Activated CD8-positive, alpha-beta T cell treated with anti-CD3 and anti-CD28 coated beads for 36 hours (primary cell): ENCODE measurements at regions of chr5 and their contacts with region 1.

Region 1: GRCh38 chr5:157328277-157328912 is 62.5 kb downstream of the CYFIP2 start:
- DNase-seq: peak; percentile 69
- ATAC-seq: peak; percentile 97
- H3K4me3 Mint-ChIP-seq: no peak overlapping the region
- H3K27ac Mint-ChIP-seq: peak overlapping the region; percentile 49
- H3K4me1 Mint-ChIP-seq: peaks cover 49% of the 10 kb centered on the region
- H3K27me3 Mint-ChIP-seq: no peaks in the 10 kb centered on the region
- CTCF ChIP-seq: peak; percentile 83

Region 2: DNA sequence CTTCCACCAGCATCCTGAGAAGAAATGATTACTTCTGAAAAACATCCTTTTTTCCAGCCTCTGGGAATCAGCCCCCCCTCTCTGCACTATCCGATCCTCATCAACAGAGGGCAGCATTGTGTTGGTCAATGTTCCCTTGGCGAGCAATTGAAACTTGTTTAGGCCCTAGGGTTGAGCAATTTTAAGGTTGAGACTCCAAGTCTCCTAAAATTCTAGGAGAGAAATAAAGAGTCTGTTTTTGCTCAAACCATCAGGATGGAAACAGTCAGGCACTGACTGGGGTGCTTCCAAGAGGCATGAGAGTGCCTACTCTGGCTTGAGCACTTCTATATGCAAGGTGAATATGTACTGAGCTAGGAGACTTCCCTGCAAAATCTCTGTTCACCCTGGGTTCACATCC is 74.8 kb before region 1 on chr5:
- CTCF ChIA-PET with region 1: interaction called, 14 read pairs
- POLR2A ChIA-PET with region 1: no interaction called
- intact Hi-C with region 1: no loop called
- DNase-seq: no peak
- ATAC-seq: no peak
- H3K4me3 Mint-ChIP-seq: peak overlapping the region; percentile 28
- H3K27ac Mint-ChIP-seq: peak overlapping the region; percentile 95
- H3K4me1 Mint-ChIP-seq: peaks cover 94% of the 10 kb centered on the region
- H3K27me3 Mint-ChIP-seq: no peaks in the 10 kb centered on the region
- CTCF ChIP-seq: peak; percentile 81

Region 3: GRCh38 chr5:157342822-157343402 is 14.5 kb after region 1 on chr5:
- CTCF ChIA-PET with region 1: interaction called, 112 read pairs
- POLR2A ChIA-PET with region 1: interaction called, 4 read pairs
- intact Hi-C with region 1: no loop called
- DNase-seq: peak; percentile 46
- ATAC-seq: no peak
- H3K4me3 Mint-ChIP-seq: no peak overlapping the region
- H3K27ac Mint-ChIP-seq: peak overlapping the region; percentile 50
- H3K4me1 Mint-ChIP-seq: peaks cover 39% of the 10 kb centered on the region
- H3K27me3 Mint-ChIP-seq: no peaks in the 10 kb centered on the region
- CTCF ChIP-seq: peak; percentile 69

Region 4: GRCh38 chr5:157362012-157362411 is 33.6 kb after region 1 on chr5:
- CTCF ChIA-PET with region 1: interaction called, 21 read pairs
- POLR2A ChIA-PET with region 1: no interaction called
- intact Hi-C with region 1: no loop called
- DNase-seq: no peak
- ATAC-seq: no peak
- H3K4me3 Mint-ChIP-seq: no peak overlapping the region
- H3K27ac Mint-ChIP-seq: peak overlapping the region; percentile 69
- H3K4me1 Mint-ChIP-seq: peaks cover 12% of the 10 kb centered on the region
- H3K27me3 Mint-ChIP-seq: no peaks in the 10 kb centered on the region
- CTCF ChIP-seq: no peak

Region 5: DNA sequence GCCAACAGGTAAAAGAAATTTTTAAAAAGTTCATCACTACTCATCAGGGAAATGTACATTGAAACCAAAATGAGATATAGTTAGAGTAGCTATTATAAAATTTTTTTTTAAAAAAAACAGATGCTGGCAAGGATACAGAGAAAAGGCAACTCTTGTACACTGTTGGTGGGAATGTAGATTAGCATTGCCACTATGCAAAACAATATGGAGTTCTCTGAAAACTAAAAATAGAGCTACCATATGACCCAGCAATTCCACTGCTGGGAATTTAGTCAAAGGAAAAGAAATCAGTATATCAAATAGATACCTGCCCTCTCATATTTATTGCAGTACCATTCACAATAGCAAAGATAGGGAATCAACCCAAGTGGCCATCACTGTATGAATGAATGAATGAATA is 87.4 kb after region 1 on chr5:
- CTCF ChIA-PET with region 1: no interaction called
- POLR2A ChIA-PET with region 1: no interaction called
- intact Hi-C with region 1: no loop called
- DNase-seq: no peak
- ATAC-seq: no peak
- H3K4me3 Mint-ChIP-seq: no peak overlapping the region
- H3K27ac Mint-ChIP-seq: no peak overlapping the region
- H3K4me1 Mint-ChIP-seq: no peaks in the 10 kb centered on the region
- H3K27me3 Mint-ChIP-seq: peaks cover 3% of the 10 kb centered on the region
- CTCF ChIP-seq: no peak

Region 6: DNA sequence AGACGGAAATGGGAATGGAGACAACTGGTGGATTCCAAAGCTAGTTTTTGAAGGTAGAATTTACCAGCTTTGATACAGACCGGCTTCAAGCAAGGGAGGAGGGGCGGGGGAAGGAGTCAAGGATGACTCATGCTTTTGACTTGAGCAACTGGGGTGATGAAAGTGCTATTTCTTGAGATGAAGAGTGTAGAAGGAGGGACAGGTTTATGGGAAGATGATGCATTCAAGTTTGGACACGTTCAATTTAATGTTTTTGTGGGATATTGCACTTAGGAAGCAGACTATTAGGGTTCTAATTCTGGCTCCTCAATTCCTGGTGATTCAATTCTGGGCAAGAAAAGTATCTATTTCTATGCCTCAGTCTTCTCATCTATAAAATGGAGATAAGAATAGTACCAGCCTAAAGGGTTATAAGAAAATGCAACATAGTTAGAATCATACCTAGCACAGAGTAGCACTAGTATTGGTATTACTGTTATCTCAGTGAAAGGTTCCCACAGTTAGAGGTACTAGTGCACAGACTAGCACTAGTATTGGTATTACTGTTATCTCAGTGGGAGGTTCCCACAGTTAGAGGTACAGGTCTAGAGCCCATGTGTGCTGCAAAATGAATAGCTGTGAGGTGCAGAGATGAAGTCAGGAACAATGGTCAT is 136.2 kb after region 1 on chr5:
- CTCF ChIA-PET with region 1: interaction called, 59 read pairs
- POLR2A ChIA-PET with region 1: no interaction called
- intact Hi-C with region 1: no loop called
- DNase-seq: peak; percentile 85
- ATAC-seq: peak; percentile 86
- H3K4me3 Mint-ChIP-seq: no peak overlapping the region
- H3K27ac Mint-ChIP-seq: peak overlapping the region; percentile 47
- H3K4me1 Mint-ChIP-seq: peaks cover 18% of the 10 kb centered on the region
- H3K27me3 Mint-ChIP-seq: peaks cover 20% of the 10 kb centered on the region
- CTCF ChIP-seq: no peak

Region 7: GRCh38 chr5:157718519-157718918 is 390.1 kb after region 1 on chr5:
- CTCF ChIA-PET with region 1: interaction called, 10 read pairs
- POLR2A ChIA-PET with region 1: no interaction called
- intact Hi-C with region 1: no loop called
- DNase-seq: peak; percentile 4
- ATAC-seq: peak; percentile 86
- H3K4me3 Mint-ChIP-seq: no peak overlapping the region
- H3K27ac Mint-ChIP-seq: no peak overlapping the region
- H3K4me1 Mint-ChIP-seq: peaks cover 4% of the 10 kb centered on the region
- H3K27me3 Mint-ChIP-seq: no peaks in the 10 kb centered on the region
- CTCF ChIP-seq: peak; percentile 54